HepG2 (cell line): ENCODE measurements at regions of chr16 and their contacts with region 1.

Region 1: DNA sequence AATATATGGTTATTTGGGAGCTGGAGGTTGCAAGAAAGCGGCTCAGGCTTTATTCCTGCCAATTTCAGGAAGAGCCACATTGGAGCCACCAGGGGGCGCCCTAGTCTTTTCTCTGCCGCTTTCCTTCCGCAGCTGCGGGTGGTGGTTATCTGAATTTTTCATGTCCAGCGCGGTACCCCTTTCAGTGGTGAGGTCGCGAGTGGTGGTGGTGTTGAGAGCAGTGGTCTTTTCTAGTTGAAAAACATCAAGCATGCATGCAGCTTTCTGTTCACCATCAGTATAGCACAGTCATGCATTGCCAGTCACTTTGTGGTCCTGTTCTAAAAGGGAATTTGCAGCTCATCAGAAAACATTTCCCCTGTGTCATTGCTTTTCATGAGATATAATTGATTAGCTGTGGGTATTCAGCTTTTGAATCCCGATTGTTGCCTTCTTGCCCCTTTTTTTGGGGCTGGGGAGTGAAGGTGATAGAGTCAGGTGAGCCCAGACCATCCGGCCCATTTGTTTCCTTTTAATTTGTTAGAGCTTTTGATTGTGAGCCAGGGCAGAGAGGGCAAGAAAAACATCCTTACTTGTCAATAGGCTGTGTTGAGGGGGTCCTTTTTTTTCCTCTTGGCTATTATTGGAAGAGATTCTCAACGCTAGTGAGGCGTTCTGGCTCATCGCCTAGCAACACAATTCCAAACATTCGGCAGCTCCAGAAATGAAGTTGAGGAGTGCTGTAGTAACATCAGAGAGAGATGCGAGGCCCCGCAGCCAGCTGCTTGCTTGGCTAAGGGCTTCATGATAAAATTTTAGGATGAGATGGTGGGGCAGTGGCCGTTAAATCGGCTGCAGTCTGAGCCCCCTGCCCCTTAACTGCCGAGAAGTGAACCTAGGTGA is 119.0 kb downstream of the SNX29 start:
- DNase-seq: peak; percentile 61
- ATAC-seq: no peak
- H3K4me3 ChIP-seq: no peak overlapping the region
- H3K27ac ChIP-seq: no peak overlapping the region
- H3K4me1 ChIP-seq: peaks cover 73% of the 10 kb centered on the region
- H3K27me3 ChIP-seq: no peaks in the 10 kb centered on the region
- CTCF ChIP-seq: peak; percentile 94
- EP300 ChIP-seq: no peak
- POLR2A ChIP-seq: no peak
- RAD21 ChIP-seq: peak; percentile 95

Region 2: GRCh38 chr16:11915644-11916523 is 179.6 kb before region 1 on chr16 and contains the start of gene GSPT1:
- CTCF ChIA-PET with region 1: no interaction called
- POLR2A ChIA-PET with region 1: interaction called, 12 read pairs
- in situ Hi-C with region 1: no loop called
- intact Hi-C with region 1: no loop called
- DNase-seq: peak; percentile 99
- ATAC-seq: peak; percentile 92
- H3K4me3 ChIP-seq: peak within 1 kb of the TSS; percentile 74 to 98 (median 97)
- H3K27ac ChIP-seq: peak within 1 kb of the TSS; percentile 94
- H3K4me1 ChIP-seq: peaks cover 48% of the 10 kb centered on the region
- H3K27me3 ChIP-seq: no peaks in the 10 kb centered on the region; a peak in 1 of 5 replicates
- CTCF ChIP-seq: peak; percentile 52
- EP300 ChIP-seq: peak; percentile 8 to 53; a peak in 1 of 4 replicates
- POLR2A ChIP-seq: peak; percentile 80 to 97
- RAD21 ChIP-seq: peak; percentile 52
- total RNA-seq, gene GSPT1: 316 and 449 TPM in 2 replicates

Region 3: GRCh38 chr16:12150600-12150999 is 55.1 kb after region 1 on chr16:
- CTCF ChIA-PET with region 1: no interaction called
- POLR2A ChIA-PET with region 1: interaction called, 4 read pairs
- in situ Hi-C with region 1: no loop called
- intact Hi-C with region 1: loop called (anchors 5 kb)
- DNase-seq: no peak
- ATAC-seq: peak; percentile 35
- H3K4me3 ChIP-seq: no peak overlapping the region
- H3K27ac ChIP-seq: no peak overlapping the region
- H3K4me1 ChIP-seq: peaks cover 32% of the 10 kb centered on the region
- H3K27me3 ChIP-seq: no peaks in the 10 kb centered on the region
- CTCF ChIP-seq: no peak
- EP300 ChIP-seq: no peak
- POLR2A ChIP-seq: no peak
- RAD21 ChIP-seq: no peak

Region 4: GRCh38 chr16:12228602-12229499 is 133.3 kb after region 1 on chr16:
- CTCF ChIA-PET with region 1: interaction called, 9 read pairs
- POLR2A ChIA-PET with region 1: interaction called, 14 read pairs
- in situ Hi-C with region 1: no loop called
- intact Hi-C with region 1: no loop called
- DNase-seq: peak; percentile 70
- ATAC-seq: peak; percentile 93
- H3K4me3 ChIP-seq: peak overlapping the region in 2 of 3 experiments; percentile 1 to 44; a peak in 2 of 6 replicates
- H3K27ac ChIP-seq: no peak overlapping the region
- H3K4me1 ChIP-seq: peaks cover 56% of the 10 kb centered on the region
- H3K27me3 ChIP-seq: no peaks in the 10 kb centered on the region
- CTCF ChIP-seq: peak; percentile 98
- EP300 ChIP-seq: no peak
- POLR2A ChIP-seq: no peak
- RAD21 ChIP-seq: peak; percentile 94

Region 5: GRCh38 chr16:12271006-12271405 is 175.5 kb after region 1 on chr16:
- CTCF ChIA-PET with region 1: interaction called, 13 read pairs
- POLR2A ChIA-PET with region 1: interaction called, 3 read pairs
- in situ Hi-C with region 1: no loop called
- intact Hi-C with region 1: no loop called
- DNase-seq: peak; percentile 52
- ATAC-seq: peak; percentile 91
- H3K4me3 ChIP-seq: no peak overlapping the region
- H3K27ac ChIP-seq: no peak overlapping the region
- H3K4me1 ChIP-seq: peaks cover 18% of the 10 kb centered on the region
- H3K27me3 ChIP-seq: no peaks in the 10 kb centered on the region
- CTCF ChIP-seq: peak; percentile 71
- EP300 ChIP-seq: no peak
- POLR2A ChIP-seq: no peak
- RAD21 ChIP-seq: peak; percentile 81

Region 6: DNA sequence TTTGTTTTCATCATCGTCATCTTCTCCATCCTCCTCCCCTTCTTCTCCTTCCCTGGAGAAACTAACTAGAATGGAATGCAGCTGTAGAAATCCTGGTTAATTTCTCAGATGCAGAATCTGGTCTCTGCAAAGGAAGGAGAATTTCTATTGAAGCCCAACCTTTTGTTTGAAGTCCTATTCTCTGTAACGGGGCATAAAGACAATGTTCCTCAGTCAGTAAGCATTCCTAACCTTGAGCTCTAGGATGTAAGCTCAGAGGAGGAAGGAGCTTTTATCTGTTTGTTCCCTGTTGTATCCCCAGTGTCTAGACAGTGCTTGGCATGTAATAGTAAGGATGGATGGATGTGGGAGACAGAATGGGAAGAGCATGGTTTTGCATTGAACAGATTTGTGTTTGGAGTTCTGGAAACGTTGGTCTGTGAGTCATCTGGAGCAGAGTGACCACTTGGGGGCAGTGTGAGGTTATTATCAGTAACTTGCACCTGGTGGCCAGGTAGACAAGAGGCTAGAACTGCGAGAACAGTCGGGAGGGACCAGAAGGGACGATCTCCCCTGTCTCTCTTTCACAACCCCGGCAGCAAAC is 244.7 kb after region 1 on chr16:
- CTCF ChIA-PET with region 1: interaction called, 8 read pairs
- POLR2A ChIA-PET with region 1: interaction called, 5 read pairs
- in situ Hi-C with region 1: no loop called
- intact Hi-C with region 1: loop called (anchors 10 kb)
- DNase-seq: peak; percentile 74
- ATAC-seq: peak; percentile 85
- H3K4me3 ChIP-seq: no peak overlapping the region
- H3K27ac ChIP-seq: no peak overlapping the region
- H3K4me1 ChIP-seq: peaks cover 9% of the 10 kb centered on the region; the same call in 1 of the 2 replicates
- H3K27me3 ChIP-seq: no peaks in the 10 kb centered on the region
- CTCF ChIP-seq: peak; percentile 93
- EP300 ChIP-seq: no peak
- POLR2A ChIP-seq: no peak
- RAD21 ChIP-seq: peak; percentile 87